ENCODE measurements at regions of chr10 and their contacts with region 1.

Region 1: DNA sequence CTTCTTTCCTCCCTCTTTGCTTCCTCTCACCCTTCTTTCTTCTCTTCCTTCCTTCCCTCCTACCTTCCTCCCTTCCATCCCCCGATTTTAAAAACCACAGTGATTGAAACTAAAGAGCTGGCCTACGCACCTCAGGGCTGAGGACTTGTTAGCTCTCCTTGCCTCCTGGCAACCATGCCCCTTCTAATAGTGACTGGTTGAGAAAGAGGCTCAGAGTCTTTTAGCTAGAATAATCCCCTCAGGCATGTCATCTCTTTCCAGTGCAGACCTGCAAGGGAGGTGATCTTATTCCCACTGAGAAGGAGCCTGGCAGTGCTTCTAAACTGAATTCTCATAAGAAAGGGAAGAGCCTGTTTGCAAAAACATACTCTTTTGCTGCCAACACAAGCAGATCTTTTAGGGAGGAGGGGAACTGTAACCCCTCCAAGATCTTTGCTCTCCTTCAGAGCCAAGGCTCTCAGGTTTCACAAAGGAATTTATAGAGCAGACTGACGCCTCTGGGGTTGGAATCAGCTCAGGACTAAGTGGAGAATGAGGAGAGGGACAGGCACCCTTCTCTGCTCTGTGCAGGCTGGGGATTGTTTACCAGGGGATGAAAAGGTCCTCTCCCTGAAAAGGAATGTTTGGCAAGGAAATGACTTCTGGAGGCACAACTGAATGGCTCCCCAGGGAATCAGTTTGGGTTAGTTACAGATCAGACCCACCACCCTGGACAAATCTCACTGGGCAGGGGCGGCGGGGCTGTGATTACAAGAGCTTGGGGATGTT is 9.4 kb upstream of the ANKRD1 start:
- DNase-seq: no peak

Region 2: DNA sequence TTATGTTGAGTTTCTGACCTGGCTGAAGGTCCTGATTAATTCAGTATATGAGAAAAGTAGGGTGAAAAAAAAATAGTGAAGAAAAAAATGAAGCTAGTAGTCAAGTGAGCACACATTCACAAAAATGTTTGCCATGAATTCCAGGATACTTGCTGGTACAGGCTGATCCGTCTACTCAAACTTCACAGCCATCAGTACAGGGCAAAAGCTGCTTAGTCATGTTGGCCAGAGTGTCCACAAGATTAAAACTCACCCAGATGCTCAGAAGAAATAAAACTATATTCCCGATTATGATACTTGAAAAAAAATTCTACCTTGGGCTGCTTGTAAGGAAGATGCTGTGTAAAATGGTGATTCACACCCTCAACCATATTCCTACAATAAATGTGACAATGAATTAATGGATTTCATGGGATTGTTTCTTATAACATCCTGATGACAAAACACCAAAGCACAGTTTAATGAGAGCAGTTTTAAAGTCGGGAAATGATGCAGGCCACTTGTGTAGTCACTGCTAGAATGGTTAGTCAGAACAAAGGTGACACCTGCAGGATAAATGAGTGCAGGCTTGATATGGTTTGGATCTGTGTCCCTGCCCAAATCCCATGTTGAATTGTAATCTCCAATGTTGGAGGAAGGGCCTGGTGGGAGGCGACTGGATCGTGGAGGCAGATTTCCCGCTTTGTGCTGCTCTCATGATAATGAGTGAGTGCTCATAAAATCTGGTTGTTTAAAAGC is 39.9 kb after region 1 on chr10:
- intact Hi-C with region 1: loop called (anchors 5 kb)
- DNase-seq: no peak